Common myeloid progenitor, CD34-positive (primary cell): ENCODE measurements at regions of chr18 and their contacts with region 1.

Region 1: GRCh38 chr18:3129053-3129864 is 90.5 kb downstream of the MYOM1 start:
- DNase-seq: peak; percentile 83 to 91 (median 91)
- H3K4me3 ChIP-seq: peak overlapping the region in 1 of 7 experiments; percentile 46
- H3K27ac ChIP-seq: no peak overlapping the region
- H3K4me1 ChIP-seq: peaks cover 0 to 4% (median 0%) of the 10 kb centered on the region in 4 experiments
- H3K27me3 ChIP-seq: no peaks in the 10 kb centered on the region

Region 2: DNA sequence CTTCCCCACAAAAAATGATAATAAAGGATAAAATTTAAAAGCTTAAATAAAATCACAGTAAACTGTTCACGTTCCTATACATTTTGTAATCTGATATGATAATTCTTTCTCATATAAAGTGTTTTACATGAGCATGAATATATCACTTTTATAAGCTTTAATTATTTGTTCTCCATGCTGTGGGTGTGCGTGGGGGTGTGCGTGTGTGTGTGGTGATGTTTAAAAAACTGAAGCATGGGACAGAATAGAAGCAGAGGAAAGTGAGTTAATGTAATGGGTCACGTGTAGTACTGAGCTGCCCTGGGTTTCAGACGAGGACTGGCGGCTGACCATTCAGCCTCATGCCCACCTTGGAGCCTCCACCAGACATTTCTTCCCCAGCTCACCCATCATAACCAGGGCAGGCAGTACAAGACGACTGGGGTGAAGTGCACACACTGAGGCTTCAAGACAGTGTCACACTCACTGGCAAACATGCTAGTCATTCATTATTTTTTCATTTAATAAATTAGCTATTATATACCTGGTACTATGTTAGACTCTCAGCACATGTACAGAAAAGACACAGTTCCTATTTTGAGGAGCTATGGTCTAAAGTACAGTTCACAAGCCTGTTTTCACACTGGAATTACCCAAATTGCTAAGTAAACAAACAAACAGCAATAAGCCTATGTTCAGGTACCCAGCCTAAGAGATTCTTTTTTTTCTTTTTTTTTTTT is 19.1 kb before region 1 on chr18:
- CTCF ChIA-PET with region 1: interaction called, 17 read pairs
- POLR2A ChIA-PET with region 1: no interaction called
- DNase-seq: no peak
- H3K4me3 ChIP-seq: no peak overlapping the region
- H3K27ac ChIP-seq: no peak overlapping the region
- H3K4me1 ChIP-seq: peaks cover 0 to 2% (median 0%) of the 10 kb centered on the region in 4 experiments
- H3K27me3 ChIP-seq: no peaks in the 10 kb centered on the region

Region 3: GRCh38 chr18:3117493-3118192 is 11.6 kb before region 1 on chr18:
- CTCF ChIA-PET with region 1: interaction called, 17 read pairs
- POLR2A ChIA-PET with region 1: no interaction called
- DNase-seq: no peak
- H3K4me3 ChIP-seq: no peak overlapping the region
- H3K27ac ChIP-seq: no peak overlapping the region
- H3K4me1 ChIP-seq: peaks cover 2 to 15% (median 8%) of the 10 kb centered on the region in 4 experiments
- H3K27me3 ChIP-seq: no peaks in the 10 kb centered on the region

Region 4: GRCh38 chr18:3140986-3141639 is 11.9 kb after region 1 on chr18:
- CTCF ChIA-PET with region 1: interaction called, 23 read pairs
- POLR2A ChIA-PET with region 1: no interaction called
- DNase-seq: no peak
- H3K4me3 ChIP-seq: no peak overlapping the region
- H3K27ac ChIP-seq: no peak overlapping the region
- H3K4me1 ChIP-seq: no peaks in the 10 kb centered on the region
- H3K27me3 ChIP-seq: no peaks in the 10 kb centered on the region

Region 5: GRCh38 chr18:3151399-3152264 is 22.4 kb after region 1 on chr18:
- CTCF ChIA-PET with region 1: interaction called, 14 read pairs
- POLR2A ChIA-PET with region 1: no interaction called
- DNase-seq: peak; percentile 49 to 79 (median 76)
- H3K4me3 ChIP-seq: no peak overlapping the region
- H3K27ac ChIP-seq: no peak overlapping the region
- H3K4me1 ChIP-seq: no peaks in the 10 kb centered on the region
- H3K27me3 ChIP-seq: no peaks in the 10 kb centered on the region

Region 6: GRCh38 chr18:3498698-3499471 is 369.6 kb after region 1 on chr18:
- CTCF ChIA-PET with region 1: no interaction called
- POLR2A ChIA-PET with region 1: no interaction called
- DNase-seq: peak; percentile 33 to 72 (median 57)
- H3K4me3 ChIP-seq: peak overlapping the region; percentile 46 to 78 (median 63)
- H3K27ac ChIP-seq: no peak overlapping the region
- H3K4me1 ChIP-seq: peaks cover 9 to 23% (median 19%) of the 10 kb centered on the region in 4 experiments
- H3K27me3 ChIP-seq: peaks cover 0 to 4% (median 0%) of the 10 kb centered on the region in 5 experiments